ENCODE measurements at regions of chr2 and their contacts with region 1.

Region 1: GRCh38 chr2:154623819-154624218 is 74.7 kb upstream of the KCNJ3 start:
- DNase-seq: no peak
- H3K4me3 ChIP-seq: no peak overlapping the region
- H3K27ac ChIP-seq: no peak overlapping the region
- H3K4me1 ChIP-seq: no peaks in the 10 kb centered on the region
- H3K27me3 ChIP-seq: no peaks in the 10 kb centered on the region
- CTCF ChIP-seq: peak in 9 of 11 experiments; percentile 10 to 60 (median 36)
- POLR2A ChIP-seq: no peak

Region 2: DNA sequence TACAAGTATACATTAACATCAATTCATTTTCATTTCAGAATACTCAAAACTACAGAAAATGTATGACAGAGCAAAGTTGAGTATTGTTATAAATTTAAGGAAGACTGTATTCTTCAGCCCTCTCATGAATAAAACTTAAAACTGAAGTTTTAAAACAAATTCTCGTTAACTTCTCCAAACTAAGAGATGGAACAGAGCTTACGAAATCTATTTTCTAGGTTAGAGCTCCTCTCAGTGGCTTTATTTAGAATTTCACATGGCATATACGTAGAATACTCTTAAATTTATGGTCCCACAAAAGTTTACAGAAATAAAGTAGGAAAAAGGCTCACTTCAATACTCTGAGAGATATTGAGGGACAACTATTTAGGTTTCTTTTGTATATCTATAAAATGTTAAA is 686.8 kb after region 1 on chr2:
- intact Hi-C with region 1: loop called (anchors 10 kb)
- DNase-seq: no peak
- H3K4me3 ChIP-seq: no peak overlapping the region
- H3K27ac ChIP-seq: no peak overlapping the region
- H3K4me1 ChIP-seq: no peaks in the 10 kb centered on the region
- H3K27me3 ChIP-seq: no peaks in the 10 kb centered on the region
- CTCF ChIP-seq: peak in 8 of 11 experiments; percentile 26 to 59 (median 37)
- POLR2A ChIP-seq: no peak